A549 (cell line): ENCODE measurements at regions of chr7 and their contacts with region 1.

Region 1: GRCh38 chr7:31938653-31939052 is 131.6 kb downstream of the PDE1C start:
- DNase-seq: peak; percentile 71 to 86
- ATAC-seq: peak; percentile 91 to 93
- H3K4me3 ChIP-seq: no peak overlapping the region
- H3K27ac ChIP-seq: peak overlapping the region; percentile 78 to 85
- H3K4me1 ChIP-seq: peaks cover 95% of the 10 kb centered on the region
- CTCF ChIP-seq: 0 out of 3 replicates have a peak, but pooled peaks have one; percentile 23
- EP300 ChIP-seq: no peak; a peak in 1 of 5 replicates
- POLR2A ChIP-seq: no peak
- RAD21 ChIP-seq: peak in 1 of 2 experiments; percentile 64; a peak in 3 of 5 replicates

Region 2: GRCh38 chr7:31899356-31899927 is 39.2 kb before region 1 on chr7:
- CTCF ChIA-PET with region 1: interaction called, 4 read pairs
- POLR2A ChIA-PET with region 1: interaction called, 12 read pairs
- DNase-seq: peak in 1 of 2 experiments; percentile 90
- ATAC-seq: peak; percentile 89 to 90
- H3K4me3 ChIP-seq: peak overlapping the region; percentile 45
- H3K27ac ChIP-seq: peak overlapping the region; percentile 88 to 94
- H3K4me1 ChIP-seq: peaks cover 68% of the 10 kb centered on the region
- CTCF ChIP-seq: no peak
- EP300 ChIP-seq: peak in 1 of 2 experiments; percentile 76; a peak in 2 of 5 replicates
- POLR2A ChIP-seq: no peak
- RAD21 ChIP-seq: peak in 1 of 2 experiments; percentile 27; a peak in 4 of 5 replicates